PC-9 (cell line): ENCODE measurements at regions of chr20 and their contacts with region 1.

Region 1: DNA sequence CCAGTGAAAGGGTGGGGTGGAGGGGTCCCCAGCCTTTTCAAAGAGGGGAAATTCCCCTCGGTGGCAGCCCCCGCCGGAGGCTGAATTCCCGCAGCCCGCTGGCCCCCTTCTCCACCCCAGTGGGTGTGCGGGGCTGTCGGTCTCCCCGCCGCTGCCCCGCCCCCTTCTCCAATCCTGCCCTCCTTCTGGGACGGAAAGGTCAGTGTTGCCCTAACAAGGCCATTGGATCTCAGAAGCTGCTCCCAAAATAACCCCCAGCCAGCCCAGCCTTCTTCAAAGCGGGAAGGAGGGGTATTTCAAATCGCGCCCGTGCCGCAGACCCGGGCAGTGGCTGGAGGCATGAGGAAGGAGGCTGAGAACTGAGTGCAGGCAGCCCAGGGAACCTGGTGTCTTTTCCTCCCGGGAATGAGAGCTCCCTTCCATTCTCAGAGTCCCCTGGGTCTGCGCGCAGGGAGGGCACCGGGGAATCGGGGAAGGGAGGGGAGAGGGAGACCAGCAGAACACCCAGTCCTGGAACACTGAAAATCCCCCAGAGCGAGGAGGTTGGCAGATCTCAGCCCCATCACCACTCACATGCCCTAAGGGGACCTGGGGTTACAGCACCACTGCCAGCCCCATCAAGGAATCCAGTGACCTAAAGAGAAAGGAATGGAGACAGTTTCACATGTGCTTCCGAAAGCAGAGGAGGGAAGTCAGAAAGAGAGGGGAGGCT is at the start of gene JPH2:
- DNase-seq: peak; percentile 89 to 94
- H3K4me3 ChIP-seq: peak within 1 kb of the TSS; percentile 97
- H3K27ac ChIP-seq: peak within 1 kb of the TSS; percentile 91
- H3K4me1 ChIP-seq: peaks cover 69% of the 10 kb centered on the region
- H3K27me3 ChIP-seq: no peaks in the 10 kb centered on the region
- CTCF ChIP-seq: no peak
- total RNA-seq, gene JPH2: 41.1 and 58.8 TPM in 2 replicates

Region 2: DNA sequence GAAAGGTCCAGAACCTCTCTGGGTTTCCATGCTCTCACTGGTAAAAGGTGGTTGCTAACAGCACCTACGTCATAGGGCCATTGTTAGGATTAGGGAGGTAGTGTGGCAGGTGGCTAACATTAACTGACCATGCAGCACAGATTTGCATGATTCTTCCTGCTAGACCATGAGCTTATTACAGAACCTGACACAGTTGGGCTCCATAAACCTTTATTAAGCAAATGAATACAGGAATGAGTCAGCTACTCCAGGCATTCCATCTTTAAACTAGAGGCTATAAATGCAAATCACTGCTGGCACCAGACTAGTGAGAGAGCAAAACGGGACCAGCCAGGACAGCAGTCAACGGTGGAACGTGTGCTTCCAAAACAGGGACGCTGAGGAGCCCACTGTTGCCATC is 1437.7 kb before region 1 on chr20:
- CTCF ChIA-PET with region 1: no interaction called
- POLR2A ChIA-PET with region 1: no interaction called
- intact Hi-C with region 1: no loop called
- DNase-seq: no peak
- H3K4me3 ChIP-seq: no peak overlapping the region
- H3K27ac ChIP-seq: no peak overlapping the region
- H3K4me1 ChIP-seq: no peaks in the 10 kb centered on the region
- H3K27me3 ChIP-seq: peaks cover 30% of the 10 kb centered on the region
- CTCF ChIP-seq: no peak

Region 3: GRCh38 chr20:43456809-43457639 is 730.2 kb before region 1 on chr20:
- CTCF ChIA-PET with region 1: interaction called, 10 read pairs
- POLR2A ChIA-PET with region 1: interaction called, 3 read pairs
- intact Hi-C with region 1: no loop called
- DNase-seq: peak; percentile 80 to 86
- H3K4me3 ChIP-seq: peak overlapping the region; percentile 100
- H3K27ac ChIP-seq: peak overlapping the region; percentile 99
- H3K4me1 ChIP-seq: peaks cover 14% of the 10 kb centered on the region
- H3K27me3 ChIP-seq: peaks cover 7% of the 10 kb centered on the region
- CTCF ChIP-seq: no peak

Region 4: DNA sequence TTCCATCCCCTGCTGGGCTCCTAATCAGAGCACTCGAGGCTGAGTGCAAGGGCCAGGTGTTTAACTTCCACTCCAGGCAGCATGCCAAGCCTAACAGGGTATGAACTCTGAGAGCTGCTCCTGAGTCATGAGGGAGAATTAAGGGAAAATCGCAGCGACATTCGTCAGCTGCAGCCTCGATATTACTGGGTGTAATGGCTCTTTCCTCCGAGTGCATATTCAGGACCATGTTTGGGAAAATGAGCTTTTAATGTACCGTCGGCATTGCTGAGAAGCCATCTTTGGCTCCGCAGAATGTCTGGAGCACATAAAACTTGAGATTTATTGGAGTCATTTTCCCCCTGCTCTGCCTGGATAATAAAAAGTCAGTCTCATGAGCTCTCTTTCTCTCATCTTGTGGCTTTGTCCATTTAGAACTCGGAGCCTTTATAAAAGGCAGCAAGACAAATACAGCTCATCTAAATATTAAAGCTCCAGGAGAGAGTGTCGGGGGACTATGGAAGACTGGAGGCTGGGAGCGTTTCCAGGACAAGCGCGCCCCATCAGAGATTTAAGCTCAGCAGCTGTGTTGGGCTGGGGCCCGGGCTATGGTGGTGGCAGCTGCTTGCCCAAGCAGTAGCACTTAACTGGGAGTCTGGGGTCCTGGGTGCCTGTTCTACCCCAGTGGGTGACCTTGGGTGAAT is 168.8 kb before region 1 on chr20:
- CTCF ChIA-PET with region 1: no interaction called
- POLR2A ChIA-PET with region 1: interaction called, 12 read pairs
- intact Hi-C with region 1: no loop called
- DNase-seq: peak; percentile 77 to 94
- H3K4me3 ChIP-seq: peak overlapping the region; percentile 33; the same call in 1 of the 2 replicates
- H3K27ac ChIP-seq: peak overlapping the region; percentile 51
- H3K4me1 ChIP-seq: peaks cover 26% of the 10 kb centered on the region
- H3K27me3 ChIP-seq: no peaks in the 10 kb centered on the region
- CTCF ChIP-seq: no peak

Region 5: GRCh38 chr20:44115762-44116644 is 71.2 kb before region 1 on chr20:
- CTCF ChIA-PET with region 1: interaction called, 61 read pairs
- POLR2A ChIA-PET with region 1: interaction called, 15 read pairs
- intact Hi-C with region 1: loop called (anchors 1 kb)
- DNase-seq: no peak
- H3K4me3 ChIP-seq: no peak overlapping the region
- H3K27ac ChIP-seq: no peak overlapping the region
- H3K4me1 ChIP-seq: peaks cover 7% of the 10 kb centered on the region; the same call in 1 of the 2 replicates
- H3K27me3 ChIP-seq: no peaks in the 10 kb centered on the region
- CTCF ChIP-seq: no peak

Region 6: DNA sequence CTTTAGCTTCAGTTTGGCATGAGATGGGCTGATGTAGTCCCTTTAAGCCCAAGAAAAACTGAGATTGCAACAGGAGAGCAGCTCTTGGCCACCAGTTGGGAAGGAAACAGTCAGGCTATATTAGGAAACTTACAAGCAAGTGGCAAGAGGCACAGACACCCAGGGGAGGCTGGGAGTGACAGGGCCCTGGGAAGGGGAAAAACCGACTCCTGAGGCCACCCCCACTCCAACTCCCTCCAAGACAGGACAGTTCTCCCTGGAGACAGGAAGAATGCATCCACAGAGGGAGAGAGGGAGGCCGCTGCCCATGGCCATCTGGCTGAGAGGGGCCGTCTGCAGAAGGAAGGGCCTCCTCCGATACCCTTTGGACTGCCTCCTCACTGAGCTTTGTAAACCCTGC is 20.7 kb before region 1 on chr20:
- CTCF ChIA-PET with region 1: interaction called, 3 read pairs
- POLR2A ChIA-PET with region 1: interaction called, 16 read pairs
- intact Hi-C with region 1: loop called (anchors 1 kb)
- DNase-seq: peak; percentile 57 to 82
- H3K4me3 ChIP-seq: peak overlapping the region; percentile 11; the same call in 1 of the 2 replicates
- H3K27ac ChIP-seq: peak overlapping the region; percentile 90
- H3K4me1 ChIP-seq: peaks cover 75% of the 10 kb centered on the region
- H3K27me3 ChIP-seq: no peaks in the 10 kb centered on the region
- CTCF ChIP-seq: no peak

Region 7: DNA sequence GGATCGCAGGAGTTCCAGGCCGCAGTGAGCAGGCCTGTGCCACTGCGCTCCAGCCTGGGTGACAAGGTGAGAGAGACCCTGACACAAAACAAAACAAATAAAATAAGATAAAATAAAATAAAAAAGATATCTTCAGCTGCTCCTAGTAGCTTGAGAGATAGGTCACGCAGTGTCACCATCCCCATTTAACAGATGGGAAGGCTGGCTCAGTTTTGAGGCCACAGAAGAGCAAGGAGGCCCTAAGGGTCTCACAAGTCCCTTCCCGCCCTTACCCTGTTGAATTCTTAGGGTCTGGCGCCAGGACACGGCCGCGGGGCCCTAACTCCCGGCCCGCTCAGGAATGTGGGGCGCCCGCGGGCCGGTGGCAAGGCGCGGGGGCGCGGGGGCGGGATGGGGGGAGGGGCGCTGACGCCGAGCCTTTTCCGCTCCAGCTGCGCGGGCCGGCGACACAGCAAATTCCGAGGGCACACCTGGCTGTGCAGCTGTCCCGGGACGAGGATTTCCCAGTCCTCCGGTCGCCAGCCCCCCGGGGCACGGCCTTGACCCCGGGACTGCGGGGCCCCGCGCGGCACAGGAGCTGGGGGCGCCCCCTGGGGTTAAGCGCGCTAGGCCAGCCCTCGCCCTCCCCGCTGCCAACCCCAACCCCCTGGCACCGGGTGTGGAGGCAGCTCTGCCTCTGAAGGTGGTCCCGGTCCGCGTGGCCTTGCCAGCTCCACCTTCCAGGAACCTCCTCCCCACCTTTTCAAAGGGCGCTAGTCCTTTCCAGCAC is 139.4 kb after region 1 on chr20:
- CTCF ChIA-PET with region 1: no interaction called
- POLR2A ChIA-PET with region 1: interaction called, 20 read pairs
- intact Hi-C with region 1: no loop called
- DNase-seq: no peak
- H3K4me3 ChIP-seq: no peak overlapping the region
- H3K27ac ChIP-seq: no peak overlapping the region
- H3K4me1 ChIP-seq: no peaks in the 10 kb centered on the region
- H3K27me3 ChIP-seq: no peaks in the 10 kb centered on the region
- CTCF ChIP-seq: no peak